ENCODE measurements at regions of chr7 and their contacts with region 1.

Region 1: DNA sequence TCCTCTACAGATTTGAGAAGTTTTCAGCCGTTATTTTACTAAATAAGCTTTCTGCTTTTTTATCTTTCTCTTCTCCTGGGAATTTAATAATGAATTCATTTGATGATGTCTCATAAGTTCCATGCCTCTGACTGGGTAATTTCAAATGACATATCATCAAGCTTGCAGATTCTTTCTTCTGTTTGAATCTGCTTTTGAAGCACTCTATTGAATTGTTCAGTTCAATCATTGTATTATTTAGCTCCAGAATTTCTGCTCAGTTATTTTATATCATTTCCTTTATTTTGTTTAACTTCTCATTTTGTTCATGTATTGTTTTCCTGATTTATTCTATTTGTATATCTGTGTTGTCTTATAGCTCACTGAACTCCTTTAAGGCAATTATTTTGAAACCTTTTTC is 196.9 kb upstream of the CNTNAP2 start:
- DNase-seq: no peak
- H3K4me3 ChIP-seq: no peak overlapping the region
- CTCF ChIP-seq: no peak
- POLR2A ChIP-seq: no peak

Region 2: GRCh38 chr7:144519925-144520324 is 1399.8 kb before region 1 on chr7:
- intact Hi-C with region 1: loop called (anchors 5 kb)
- DNase-seq: no peak
- H3K4me3 ChIP-seq: no peak overlapping the region
- CTCF ChIP-seq: no peak
- POLR2A ChIP-seq: no peak

Region 3: DNA sequence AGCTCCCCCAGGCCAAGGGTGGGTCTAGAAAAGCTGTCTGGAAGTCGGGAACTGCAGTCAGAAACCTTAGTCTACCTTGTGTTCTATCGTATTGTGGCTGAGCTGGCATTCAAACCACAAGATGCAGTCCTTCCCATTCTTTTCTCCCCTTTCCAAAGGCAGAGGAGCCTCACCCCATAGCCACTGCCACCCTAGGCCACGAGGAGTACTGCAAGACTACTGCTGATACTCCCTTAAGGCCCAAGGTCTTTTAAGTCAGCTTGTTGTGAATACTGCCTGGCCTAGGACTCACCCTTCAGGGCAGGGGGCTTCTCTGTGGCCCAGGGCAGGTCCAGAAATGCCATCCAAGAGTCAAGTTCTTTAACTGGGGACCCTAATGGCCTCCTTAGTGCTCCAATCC is 17.6 kb before region 1 on chr7:
- intact Hi-C with region 1: no loop called
- DNase-seq: no peak
- H3K4me3 ChIP-seq: no peak overlapping the region
- CTCF ChIP-seq: no peak
- POLR2A ChIP-seq: no peak